Endothelial cell of umbilical vein (primary cell): ENCODE measurements at regions of chr6 and their contacts with region 1.

Region 1: DNA sequence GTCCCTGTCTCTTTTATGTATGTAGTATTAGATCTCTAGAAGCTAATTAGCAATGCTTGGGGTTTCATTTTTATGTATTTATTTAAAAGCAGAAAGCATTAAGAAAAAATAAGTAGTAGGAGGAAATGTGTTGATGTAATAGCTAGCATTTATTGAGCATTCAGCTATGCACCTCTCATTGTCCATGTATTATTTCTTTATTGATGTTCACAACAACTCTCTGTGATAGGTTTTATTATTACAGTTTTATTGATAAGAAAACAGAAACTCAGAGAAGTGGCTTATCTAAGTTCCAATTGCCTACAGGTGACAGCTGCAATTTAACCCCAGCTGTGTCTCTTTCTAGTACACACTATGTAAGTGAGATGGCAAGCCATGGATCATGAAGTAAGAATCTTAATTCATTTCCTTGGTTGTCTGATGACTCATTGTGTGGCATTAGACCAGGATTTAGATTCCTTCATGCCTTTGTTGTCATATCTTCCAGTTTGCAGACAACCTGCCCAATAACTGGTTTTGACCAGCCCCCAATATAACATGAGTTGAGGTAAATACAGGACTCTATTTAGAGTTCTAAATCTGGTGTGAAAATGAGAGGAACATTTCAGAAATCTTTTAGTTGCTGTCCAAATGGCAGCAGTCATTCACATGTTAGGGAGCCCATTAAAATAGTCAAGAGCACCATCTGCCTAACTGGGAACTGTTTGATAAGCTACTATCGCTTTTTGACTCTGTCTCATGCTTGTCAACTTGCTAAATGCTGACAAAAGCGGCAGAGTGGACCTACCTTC is 170.8 kb upstream of the PHACTR1 start:
- DNase-seq: peak; percentile 87
- H3K4me3 ChIP-seq: no peak overlapping the region
- H3K27ac ChIP-seq: peak overlapping the region; percentile 89
- H3K4me1 ChIP-seq: peaks cover 33% of the 10 kb centered on the region
- H3K27me3 ChIP-seq: no peaks in the 10 kb centered on the region
- CTCF ChIP-seq: no peak
- POLR2A ChIP-seq: no peak

Region 2: GRCh38 chr6:12459945-12460661 is 85.7 kb before region 1 on chr6:
- CTCF ChIA-PET with region 1: no interaction called
- POLR2A ChIA-PET with region 1: no interaction called
- dilution Hi-C with region 1: no loop called
- intact Hi-C with region 1: no loop called
- DNase-seq: no peak
- H3K4me3 ChIP-seq: no peak overlapping the region
- H3K27ac ChIP-seq: no peak overlapping the region
- H3K4me1 ChIP-seq: no peaks in the 10 kb centered on the region
- H3K27me3 ChIP-seq: no peaks in the 10 kb centered on the region
- CTCF ChIP-seq: no peak
- POLR2A ChIP-seq: no peak

Region 3: GRCh38 chr6:12567682-12568081 is 21.9 kb after region 1 on chr6:
- CTCF ChIA-PET with region 1: interaction called, 6 read pairs
- POLR2A ChIA-PET with region 1: no interaction called
- dilution Hi-C with region 1: no loop called
- intact Hi-C with region 1: loop called (anchors 1 kb)
- DNase-seq: peak; percentile 98
- H3K4me3 ChIP-seq: no peak overlapping the region
- H3K27ac ChIP-seq: peak overlapping the region; percentile 58
- H3K4me1 ChIP-seq: peaks cover 45% of the 10 kb centered on the region
- H3K27me3 ChIP-seq: no peaks in the 10 kb centered on the region
- CTCF ChIP-seq: no peak
- POLR2A ChIP-seq: peak; percentile 48

Region 4: DNA sequence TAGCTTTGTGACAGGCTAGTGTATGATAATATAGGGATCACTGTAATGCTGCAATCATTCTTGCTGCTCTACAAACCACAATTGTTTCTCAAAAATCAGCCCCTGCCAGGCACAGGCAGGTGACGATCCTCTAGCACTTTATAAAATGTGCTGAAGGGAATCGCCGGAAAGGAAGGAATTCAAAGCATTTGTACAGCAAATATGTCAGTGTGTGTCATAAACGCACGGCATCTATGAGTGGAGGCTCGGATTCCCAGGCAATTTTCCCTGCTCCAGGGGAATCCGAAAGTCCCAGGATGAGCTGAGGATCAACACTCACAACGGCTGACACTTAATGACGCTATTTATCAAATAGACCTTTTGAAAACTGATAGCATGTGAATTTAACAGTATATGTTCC is 172.2 kb after region 1 on chr6:
- CTCF ChIA-PET with region 1: no interaction called
- POLR2A ChIA-PET with region 1: no interaction called
- dilution Hi-C with region 1: no loop called
- intact Hi-C with region 1: no loop called
- DNase-seq: no peak
- H3K4me3 ChIP-seq: no peak overlapping the region
- H3K27ac ChIP-seq: no peak overlapping the region
- H3K4me1 ChIP-seq: no peaks in the 10 kb centered on the region
- H3K27me3 ChIP-seq: peaks cover 0 to 2% of the 10 kb centered on the region in 2 experiments
- CTCF ChIP-seq: no peak
- POLR2A ChIP-seq: no peak